AG04449 (cell line): ENCODE measurements at regions of chr17 and their contacts with region 1.

Region 1: GRCh38 chr17:29617125-29617480 is 5.6 kb downstream of the CORO6 start:
- DNase-seq: no peak
- H3K4me3 ChIP-seq: peak overlapping the region; percentile 12; the same call in 1 of the 2 replicates
- CTCF ChIP-seq: peak; percentile 87

Region 2: GRCh38 chr17:29589524-29590410 is 27.3 kb before region 1 on chr17 and contains the start of gene GIT1:
- CTCF ChIA-PET with region 1: interaction called, 210 read pairs
- POLR2A ChIA-PET with region 1: interaction called, 3 read pairs
- DNase-seq: no peak
- H3K4me3 ChIP-seq: peak within 1 kb of the TSS; percentile 82
- CTCF ChIP-seq: no peak

Region 3: DNA sequence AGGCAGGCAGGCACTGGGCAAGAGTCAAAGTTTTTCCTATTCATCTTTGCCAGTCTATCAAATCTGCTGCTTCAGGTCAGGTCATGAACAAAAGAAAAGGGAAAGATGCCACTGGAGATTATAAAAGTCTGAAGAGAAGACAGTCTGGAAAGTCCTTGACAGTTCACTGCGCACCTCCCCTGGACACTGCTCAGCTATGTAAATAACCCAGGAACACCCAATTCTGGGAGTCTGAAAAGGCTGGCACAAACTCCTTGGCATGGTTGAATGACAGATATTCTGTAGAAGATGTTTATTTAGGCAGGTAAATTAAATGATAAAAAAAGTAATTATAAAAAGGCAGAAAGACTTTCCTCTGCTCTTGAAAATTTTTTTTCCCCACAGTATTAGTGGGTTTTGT is 10.9 kb after region 1 on chr17:
- CTCF ChIA-PET with region 1: interaction called, 40 read pairs
- POLR2A ChIA-PET with region 1: no interaction called
- DNase-seq: no peak
- H3K4me3 ChIP-seq: no peak overlapping the region
- CTCF ChIP-seq: no peak

Region 4: DNA sequence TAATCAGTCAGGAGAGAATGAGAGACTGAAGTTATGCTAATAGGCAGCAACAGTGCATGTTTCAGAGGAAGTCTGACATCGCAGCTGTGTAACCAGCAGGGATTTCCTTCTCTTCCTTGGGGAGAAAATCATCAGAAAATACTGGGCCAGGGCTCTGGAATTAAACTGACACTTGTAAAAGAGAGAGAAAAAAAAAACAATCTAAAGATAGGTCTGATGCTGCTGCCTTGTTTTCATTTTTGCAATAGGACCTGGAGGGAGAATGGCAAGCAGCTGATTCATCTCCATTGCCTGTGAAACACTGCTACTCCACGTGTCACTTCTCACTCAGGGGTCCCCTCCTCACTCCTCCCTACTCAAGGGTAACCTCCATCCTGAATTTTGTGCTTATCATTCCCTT is 23.3 kb after region 1 on chr17:
- CTCF ChIA-PET with region 1: interaction called, 76 read pairs
- POLR2A ChIA-PET with region 1: no interaction called
- DNase-seq: peak; percentile 57
- H3K4me3 ChIP-seq: no peak overlapping the region
- CTCF ChIP-seq: no peak

Region 5: GRCh38 chr17:29807520-29808351 is 190.6 kb after region 1 on chr17:
- CTCF ChIA-PET with region 1: interaction called, 10 read pairs
- POLR2A ChIA-PET with region 1: no interaction called
- DNase-seq: no peak
- H3K4me3 ChIP-seq: no peak overlapping the region
- CTCF ChIP-seq: peak; percentile 67